ENCODE measurements at regions of chr10 and their contacts with region 1.

Region 1: GRCh38 chr10:96374985-96375830 is 16.4 kb upstream of the OPALIN start:
- DNase-seq: peak; percentile 85
- ATAC-seq: peak; percentile 85

Region 2: GRCh38 chr10:96513698-96514561 is 138.7 kb after region 1 on chr10 and contains the start of gene TLL2:
- intact Hi-C with region 1: loop called (anchors 1 kb)
- DNase-seq: peak; percentile 93
- ATAC-seq: peak; percentile 96
- total RNA-seq, gene TLL2: 10.8 TPM

Region 3: DNA sequence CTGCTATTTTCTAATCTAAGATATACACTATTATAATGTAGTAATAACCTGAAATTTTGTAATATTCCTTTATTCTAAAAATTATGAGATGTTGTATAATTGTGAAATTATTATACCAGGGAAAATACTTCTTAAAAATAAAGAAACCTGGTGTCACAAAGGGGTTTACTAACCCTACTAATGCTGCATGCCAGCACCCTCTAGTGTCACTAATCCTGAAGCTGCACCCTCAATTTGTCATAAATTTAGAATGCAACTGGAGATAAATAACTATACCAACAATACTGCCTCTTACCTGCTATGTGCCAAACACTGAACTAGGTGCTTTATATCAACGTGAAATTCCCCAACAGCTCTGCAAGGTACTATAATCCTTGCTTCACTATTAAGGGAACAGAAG is 180.8 kb after region 1 on chr10:
- intact Hi-C with region 1: loop called (anchors 5 kb)
- DNase-seq: no peak
- ATAC-seq: no peak

Region 4: DNA sequence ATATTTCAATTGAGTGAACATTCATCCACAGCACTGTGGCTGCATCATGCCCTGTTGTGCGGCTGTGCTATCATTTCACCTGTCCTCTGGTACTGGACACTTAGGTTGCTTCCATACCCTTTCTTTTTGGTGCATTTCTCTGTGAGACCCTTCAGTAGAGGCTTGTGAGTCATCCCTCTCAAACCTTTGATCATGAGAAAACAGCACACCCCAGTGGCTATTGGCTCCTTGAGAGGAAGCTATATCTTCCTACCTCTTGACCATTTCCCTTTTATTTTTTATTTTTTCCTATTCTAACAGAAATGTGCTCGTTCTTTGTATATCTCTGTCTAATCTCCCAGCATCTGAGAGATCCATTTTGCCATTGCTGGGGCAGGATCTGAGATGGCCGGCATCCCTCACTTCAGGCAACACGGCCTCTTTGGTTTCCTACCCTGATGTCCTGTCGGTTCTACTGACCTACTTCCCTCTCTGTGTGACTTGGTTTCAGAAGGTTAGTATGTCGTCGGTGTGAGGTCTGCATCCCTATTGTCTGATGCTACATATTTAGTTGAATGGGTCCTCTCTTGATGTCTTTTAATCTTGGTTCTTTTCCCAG is 368.9 kb after region 1 on chr10:
- intact Hi-C with region 1: loop called (anchors 5 kb)
- DNase-seq: no peak
- ATAC-seq: peak; percentile 57

Region 5: GRCh38 chr10:96831867-96832720 is 456.9 kb after region 1 on chr10 and contains the start of gene LCOR:
- intact Hi-C with region 1: loop called (anchors 5 kb)
- DNase-seq: peak; percentile 93
- ATAC-seq: peak; percentile 91
- total RNA-seq, gene LCOR: 21.7 TPM

Region 6: DNA sequence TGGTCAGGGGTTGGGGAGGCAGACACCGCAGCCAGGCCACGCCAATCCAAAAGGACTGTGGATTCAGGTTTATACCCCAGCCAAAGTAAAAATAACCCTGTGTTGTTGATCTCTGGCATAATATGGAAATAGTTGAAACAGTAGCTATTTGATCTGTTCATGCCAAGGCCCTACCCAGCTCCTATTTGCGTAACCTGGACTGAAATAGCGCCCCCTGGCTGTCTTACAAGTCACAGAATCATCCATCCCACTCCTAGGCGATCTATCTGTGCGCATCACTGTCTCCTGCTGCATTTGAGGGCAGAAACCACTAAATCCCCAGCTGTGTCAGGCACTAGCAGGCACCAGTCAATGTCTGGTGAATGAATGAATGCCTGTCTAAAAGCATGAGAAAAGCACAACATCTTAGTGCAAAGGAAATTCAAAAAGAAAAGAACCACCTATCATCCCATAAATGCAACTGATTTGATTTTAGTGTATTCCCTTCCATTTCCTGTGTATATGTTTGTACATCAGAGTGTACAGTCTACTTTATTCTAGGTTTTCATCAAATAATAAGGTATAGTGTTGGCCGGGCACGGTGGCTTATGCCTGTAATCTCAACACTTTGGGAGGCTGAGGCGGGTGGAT is 650.5 kb after region 1 on chr10:
- intact Hi-C with region 1: loop called (anchors 10 kb)
- DNase-seq: no peak
- ATAC-seq: peak; percentile 41

Measured in Right ventricle myocardium inferior (tissue), 1 donor.